Esophagus squamous epithelium (tissue), 5 donors: ENCODE measurements at regions of chr11 and their contacts with region 1.

Region 1: DNA sequence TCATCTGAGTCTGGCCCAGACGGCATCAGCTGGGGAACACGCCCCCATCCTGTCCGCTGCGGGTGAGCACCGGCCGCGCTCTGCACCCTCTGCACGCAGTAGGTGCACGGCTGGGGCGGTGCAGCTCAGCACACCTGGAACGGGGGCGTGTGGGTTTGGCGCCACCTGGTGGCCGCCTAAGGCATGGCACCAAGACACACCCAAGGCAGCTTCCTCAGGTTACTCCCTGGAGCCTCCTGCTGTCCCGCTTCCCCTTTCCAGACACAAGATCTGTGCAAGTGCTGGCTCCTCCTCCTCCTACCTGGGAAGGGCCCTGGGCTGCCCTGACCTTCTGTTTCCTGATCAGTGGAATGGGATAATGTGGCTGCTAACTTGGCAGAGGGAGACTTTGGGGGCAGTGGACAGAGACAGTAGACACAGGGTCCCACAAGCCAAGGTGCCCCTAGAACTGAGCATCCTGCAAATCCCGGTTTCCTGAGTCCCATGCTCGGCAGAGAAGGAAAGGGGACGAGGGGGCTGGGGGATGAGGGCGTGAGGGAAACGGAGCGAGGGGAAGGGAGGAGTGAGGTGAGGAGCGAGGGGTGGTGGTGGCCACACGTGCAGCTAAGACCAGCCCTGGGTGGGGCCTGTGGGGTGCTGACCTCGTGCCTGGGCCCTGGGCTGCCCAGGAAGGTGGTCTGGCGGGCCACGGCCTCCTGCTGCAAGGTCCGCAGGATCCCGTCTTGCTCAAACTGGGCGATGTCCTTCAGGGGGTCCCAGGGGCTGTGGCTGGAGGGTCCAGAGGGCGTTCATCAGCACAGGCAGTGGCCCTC is 34.8 kb upstream of the CARS1 start:
- DNase-seq: no peak
- H3K4me3 ChIP-seq: no peak overlapping the region
- H3K27ac ChIP-seq: no peak overlapping the region
- H3K4me1 ChIP-seq: peaks cover 0 to 21% (median 6%) of the 10 kb centered on the region in 3 donors
- H3K27me3 ChIP-seq: no peaks in the 10 kb centered on the region
- CTCF ChIP-seq: peak; percentile 97 to 100 (median 98)
- POLR2A ChIP-seq: no peak

Region 2: GRCh38 chr11:3026803-3027202 is 65.2 kb before region 1 on chr11:
- intact Hi-C with region 1: no loop called
- DNase-seq: no peak
- H3K4me3 ChIP-seq: no peak overlapping the region
- H3K27ac ChIP-seq: no peak overlapping the region
- H3K4me1 ChIP-seq: peaks cover 0 to 29% (median 7%) of the 10 kb centered on the region in 3 donors
- H3K27me3 ChIP-seq: no peaks in the 10 kb centered on the region
- CTCF ChIP-seq: no peak
- POLR2A ChIP-seq: no peak

Region 3: DNA sequence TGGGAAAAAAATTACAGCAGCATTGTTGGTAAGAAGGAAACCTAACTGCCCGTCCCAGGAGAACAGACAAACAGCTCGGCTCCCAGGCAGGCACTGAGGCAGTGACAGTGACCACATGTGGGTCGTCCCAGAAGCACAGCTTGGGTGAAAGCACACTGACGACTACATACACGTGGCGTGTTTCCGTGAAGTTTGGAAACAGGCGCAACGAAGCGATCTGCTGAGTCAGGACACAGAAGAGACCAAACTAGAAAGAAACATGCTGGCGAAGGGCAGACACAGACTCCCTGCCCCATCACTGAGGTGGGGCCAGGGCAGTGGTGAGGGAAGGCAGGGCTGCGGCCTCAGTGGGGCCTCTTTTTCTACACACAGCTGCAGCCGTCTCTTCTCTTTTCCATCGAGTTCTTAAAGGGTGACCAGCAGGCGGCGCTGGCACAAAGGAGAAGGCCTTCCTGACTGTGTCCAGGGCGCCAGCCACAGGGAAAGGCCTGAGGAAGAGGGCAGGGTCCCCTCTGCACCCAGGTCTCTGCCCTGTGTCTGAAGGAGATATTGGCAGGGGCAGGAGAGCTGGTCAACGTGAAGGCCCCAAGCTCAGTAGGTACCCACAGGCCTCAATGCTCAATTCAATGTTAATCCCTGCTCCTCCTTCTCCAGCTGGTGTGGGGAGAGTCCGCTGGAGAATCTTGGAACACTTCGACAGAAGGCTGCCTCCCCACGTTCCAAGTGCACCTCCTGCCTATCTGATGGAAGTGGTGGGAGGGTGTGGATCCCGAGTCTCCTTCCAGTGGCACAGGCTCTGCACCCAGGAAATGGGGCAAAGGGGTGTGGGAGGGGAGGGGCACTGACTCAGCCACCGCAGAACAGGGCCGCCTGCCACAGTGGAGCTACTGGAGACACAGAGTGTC is 54.7 kb before region 1 on chr11:
- intact Hi-C with region 1: loop called (anchors 5 kb)
- DNase-seq: no peak
- H3K4me3 ChIP-seq: no peak overlapping the region
- H3K27ac ChIP-seq: peak overlapping the region in 3 of 4 donors; percentile 26 to 65 (median 60)
- H3K4me1 ChIP-seq: peaks cover 8 to 25% (median 10%) of the 10 kb centered on the region in 3 donors
- H3K27me3 ChIP-seq: no peaks in the 10 kb centered on the region
- CTCF ChIP-seq: peak; percentile 63 to 85 (median 77)
- POLR2A ChIP-seq: no peak

Region 4: GRCh38 chr11:3642071-3642951 is 550.3 kb after region 1 on chr11:
- intact Hi-C with region 1: no loop called
- DNase-seq: no peak
- H3K4me3 ChIP-seq: peak overlapping the region; percentile 32 to 68 (median 52)
- H3K27ac ChIP-seq: peak overlapping the region in 2 of 4 donors; percentile 0 to 73
- H3K4me1 ChIP-seq: peaks cover 10 to 22% (median 10%) of the 10 kb centered on the region in 3 donors
- H3K27me3 ChIP-seq: peaks cover 0 to 21% (median 0%) of the 10 kb centered on the region in 4 donors
- CTCF ChIP-seq: no peak
- POLR2A ChIP-seq: peak in 1 of 4 donors; percentile 21